ENCODE measurements at regions of chr16 and their contacts with region 1.

Region 1: GRCh38 chr16:70695331-70696070 is 9.6 kb upstream of the MTSS2 start:
- DNase-seq: peak; percentile 72 to 95 (median 89)
- H3K4me3 ChIP-seq: peak overlapping the region in 4 of 7 experiments; percentile 15 to 49 (median 44)
- H3K27ac ChIP-seq: peak overlapping the region; percentile 14 to 73
- H3K4me1 ChIP-seq: peaks cover 0 to 67% (median 56%) of the 10 kb centered on the region in 4 experiments
- H3K27me3 ChIP-seq: no peaks in the 10 kb centered on the region

Region 2: DNA sequence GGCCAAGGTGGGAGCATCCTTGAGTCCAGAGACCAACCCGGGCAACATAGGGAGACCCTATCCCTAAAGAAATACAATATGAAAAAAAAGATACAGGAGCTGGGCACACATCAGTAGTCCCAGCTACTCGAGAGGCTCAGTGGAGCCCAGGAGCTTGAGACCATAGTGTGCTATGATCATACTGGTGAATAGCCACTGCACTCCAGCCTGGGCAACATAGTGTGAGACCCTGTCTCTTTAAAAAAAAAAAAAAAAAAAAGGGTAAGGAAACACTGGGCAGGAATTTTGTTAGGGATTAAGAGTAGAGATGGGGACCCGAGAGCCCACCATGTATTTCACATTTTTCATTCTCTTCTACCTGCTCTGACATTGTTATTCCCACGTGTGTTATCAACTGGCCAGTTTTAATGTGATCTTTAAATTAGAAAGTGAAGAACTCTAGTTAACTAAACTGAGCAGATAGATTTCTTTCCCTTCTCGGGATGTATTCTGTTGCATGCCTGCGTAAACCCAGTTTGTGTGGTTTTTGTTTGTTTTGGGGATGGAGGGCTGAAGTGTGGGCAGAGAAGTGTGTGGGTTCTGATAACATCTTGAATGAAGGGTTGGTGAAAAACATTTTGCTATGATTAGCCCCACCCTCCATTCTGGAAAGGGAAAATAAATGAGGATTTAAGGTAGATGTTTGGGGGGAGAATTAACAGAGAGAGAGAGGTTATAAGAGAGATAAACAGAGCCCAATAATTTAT is 1525.7 kb before region 1 on chr16:
- CTCF ChIA-PET with region 1: no interaction called
- POLR2A ChIA-PET with region 1: interaction called, 12 read pairs
- DNase-seq: no peak
- H3K4me3 ChIP-seq: no peak overlapping the region
- H3K27ac ChIP-seq: no peak overlapping the region
- H3K4me1 ChIP-seq: peaks cover 0 to 14% (median under 1%) of the 10 kb centered on the region in 4 experiments
- H3K27me3 ChIP-seq: peaks cover 0 to 12% (median 0%) of the 10 kb centered on the region in 5 experiments

Region 3: GRCh38 chr16:70276392-70276791 is 419.1 kb before region 1 on chr16:
- CTCF ChIA-PET with region 1: no interaction called
- POLR2A ChIA-PET with region 1: no interaction called
- DNase-seq: no peak
- H3K4me3 ChIP-seq: no peak overlapping the region
- H3K27ac ChIP-seq: no peak overlapping the region
- H3K4me1 ChIP-seq: no peaks in the 10 kb centered on the region
- H3K27me3 ChIP-seq: no peaks in the 10 kb centered on the region

Region 4: GRCh38 chr16:70661918-70662641 is 33.4 kb before region 1 on chr16:
- CTCF ChIA-PET with region 1: no interaction called
- POLR2A ChIA-PET with region 1: no interaction called
- DNase-seq: no peak
- H3K4me3 ChIP-seq: no peak overlapping the region
- H3K27ac ChIP-seq: no peak overlapping the region
- H3K4me1 ChIP-seq: no peaks in the 10 kb centered on the region
- H3K27me3 ChIP-seq: no peaks in the 10 kb centered on the region

Measured in common myeloid progenitor, CD34-positive (primary cell).